Activated T-helper 2 cell treated with anti-CD3 and anti-CD28 coated beads, Interferon-gamma antibody, Interleukin-2, Interleukin-4, amounts not matched to agents 10 μg/mL and 5 μg/mL and 100 μg/mL, durations not matched to agents 14 hours and 24 hours and 36 hours (primary cell): ENCODE measurements at regions of chr14 and their contacts with region 1.

Region 1: GRCh38 chr14:68788996-68789820 is 3.7 kb downstream of the ZFP36L1 start:
- DNase-seq: peak; percentile 81
- H3K4me3 Mint-ChIP-seq: peak overlapping the region; percentile 92
- H3K27ac Mint-ChIP-seq: peak overlapping the region; percentile 94
- H3K4me1 Mint-ChIP-seq: peaks cover 57% of the 10 kb centered on the region
- H3K27me3 Mint-ChIP-seq: no peaks in the 10 kb centered on the region

Region 2: DNA sequence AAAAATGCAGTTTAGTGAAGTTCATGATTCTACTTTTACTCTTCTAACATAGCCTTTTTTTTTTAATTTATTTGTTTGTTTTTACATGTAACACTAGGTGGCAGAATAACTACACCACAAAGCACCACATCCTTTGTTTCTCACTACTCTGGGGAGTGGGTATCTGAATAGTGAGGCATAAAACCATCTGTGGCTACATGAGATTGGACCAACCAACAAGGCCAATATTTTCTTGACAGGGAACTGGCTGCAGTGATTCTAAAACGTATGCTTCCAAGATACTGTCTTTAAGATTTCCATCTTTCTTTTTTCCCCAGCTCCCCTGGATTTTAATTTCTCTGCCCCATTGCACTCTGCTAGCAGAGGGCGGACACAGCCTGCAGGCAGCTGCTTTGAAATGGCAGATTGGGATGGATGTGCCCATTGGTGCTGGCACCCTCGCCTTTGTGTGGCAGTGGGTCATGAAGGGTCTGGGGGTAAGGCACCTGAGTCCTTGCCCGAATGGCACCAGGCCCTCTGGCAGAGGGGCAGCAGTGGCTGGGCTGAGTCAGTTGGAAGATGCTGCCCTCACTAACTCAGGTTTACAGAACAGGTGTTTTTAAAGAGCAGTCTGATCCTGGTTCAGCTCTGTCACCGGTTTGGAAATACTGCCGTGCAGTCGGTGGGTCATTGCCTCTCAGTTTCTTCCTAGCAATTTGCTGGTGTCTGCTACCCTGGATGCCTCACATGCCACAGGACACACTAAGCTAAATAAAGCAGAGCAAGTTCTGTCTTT is 540.5 kb before region 1 on chr14:
- intact Hi-C with region 1: loop called (anchors 2 kb)
- DNase-seq: no peak
- H3K4me3 Mint-ChIP-seq: no peak overlapping the region
- H3K27ac Mint-ChIP-seq: no peak overlapping the region
- H3K4me1 Mint-ChIP-seq: peaks cover 25% of the 10 kb centered on the region
- H3K27me3 Mint-ChIP-seq: no peaks in the 10 kb centered on the region

Region 3: DNA sequence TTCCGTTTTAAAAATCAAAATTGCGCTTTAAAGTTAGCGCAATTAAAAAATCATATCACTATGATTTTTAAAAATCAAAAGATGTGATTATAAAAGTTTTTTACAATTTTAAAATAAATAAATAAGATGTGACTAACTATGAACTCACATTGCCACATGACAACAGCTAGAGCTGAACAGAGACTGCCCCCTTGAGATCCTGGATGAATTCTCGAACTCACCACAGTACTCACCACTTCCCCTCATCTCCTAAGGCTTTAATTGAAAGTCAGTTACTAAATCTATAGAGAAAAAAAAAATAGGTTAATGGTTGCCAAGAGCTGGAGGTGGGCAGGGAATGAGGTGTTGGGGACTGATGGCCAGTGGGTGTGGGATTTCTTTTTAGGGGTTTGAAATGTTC is 380.5 kb before region 1 on chr14:
- intact Hi-C with region 1: loop called (anchors 10 kb)
- DNase-seq: no peak
- H3K4me3 Mint-ChIP-seq: no peak overlapping the region
- H3K27ac Mint-ChIP-seq: no peak overlapping the region
- H3K4me1 Mint-ChIP-seq: peaks cover 19% of the 10 kb centered on the region
- H3K27me3 Mint-ChIP-seq: no peaks in the 10 kb centered on the region

Region 4: GRCh38 chr14:68685419-68686204 is 103.6 kb before region 1 on chr14:
- intact Hi-C with region 1: loop called (anchors 1 kb)
- DNase-seq: peak; percentile 70
- H3K4me3 Mint-ChIP-seq: peak overlapping the region; percentile 24
- H3K27ac Mint-ChIP-seq: peak overlapping the region; percentile 76
- H3K4me1 Mint-ChIP-seq: peaks cover 41% of the 10 kb centered on the region
- H3K27me3 Mint-ChIP-seq: no peaks in the 10 kb centered on the region

Region 5: GRCh38 chr14:68816262-68816942 is 27.2 kb after region 1 on chr14:
- intact Hi-C with region 1: loop called (anchors 1 kb)
- DNase-seq: peak; percentile 83
- H3K4me3 Mint-ChIP-seq: peak overlapping the region; percentile 79
- H3K27ac Mint-ChIP-seq: peak overlapping the region; percentile 92
- H3K4me1 Mint-ChIP-seq: peaks cover 51% of the 10 kb centered on the region
- H3K27me3 Mint-ChIP-seq: no peaks in the 10 kb centered on the region